CD4-positive, alpha-beta T cell (primary cell): ENCODE measurements at regions of chr5 and their contacts with region 1.

Region 1: DNA sequence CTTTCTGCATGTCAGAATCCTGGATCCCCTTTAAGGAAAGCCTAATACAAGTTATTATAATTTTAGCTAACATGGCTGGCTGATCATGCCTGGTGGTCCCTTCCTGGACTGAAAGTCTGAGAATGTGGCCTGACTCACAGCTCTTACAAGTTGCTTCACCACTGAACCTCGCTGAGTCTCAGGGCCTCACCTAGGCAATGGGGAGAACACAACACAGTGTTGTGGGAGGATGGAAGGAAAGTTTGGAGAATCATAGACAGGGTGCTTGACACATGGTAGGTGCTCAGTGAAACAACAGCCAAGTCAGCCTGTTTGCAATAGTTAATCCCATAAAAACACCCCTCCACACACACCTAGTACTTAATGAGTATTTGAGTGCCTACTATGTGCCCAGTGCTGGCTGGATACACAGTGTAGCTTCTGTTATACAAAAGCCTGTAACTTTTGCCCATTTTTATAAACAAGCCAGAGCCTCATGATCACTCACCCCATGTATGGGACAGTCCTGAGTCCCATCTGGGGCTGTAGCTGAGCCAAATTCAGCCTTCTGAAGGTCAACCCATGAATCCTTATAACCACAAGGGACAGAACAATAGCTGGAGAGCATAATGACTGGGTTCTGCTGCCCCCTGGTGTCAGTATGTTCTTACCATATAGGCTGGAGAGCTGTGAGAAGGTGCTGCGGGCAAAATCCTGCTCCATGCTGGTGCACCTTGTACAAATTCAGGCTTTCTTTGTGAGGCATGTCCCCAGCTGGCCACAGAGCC is 3.9 kb downstream of the ACSL6 start:
- DNase-seq: peak; percentile 58 to 88 (median 72)
- ATAC-seq: peak; percentile 64
- H3K4me3 ChIP-seq: no peak overlapping the region
- H3K4me3 Mint-ChIP-seq: no peak overlapping the region
- H3K27ac ChIP-seq: no peak overlapping the region
- H3K27ac Mint-ChIP-seq: no peak overlapping the region
- H3K4me1 ChIP-seq: peaks cover 63% of the 10 kb centered on the region
- H3K4me1 Mint-ChIP-seq: peaks cover 35% of the 10 kb centered on the region
- H3K27me3 ChIP-seq: peaks cover 11 to 15% of the 10 kb centered on the region in 2 experiments
- H3K27me3 Mint-ChIP-seq: peaks cover 26% of the 10 kb centered on the region
- CTCF ChIP-seq: peak; percentile 80

Region 2: DNA sequence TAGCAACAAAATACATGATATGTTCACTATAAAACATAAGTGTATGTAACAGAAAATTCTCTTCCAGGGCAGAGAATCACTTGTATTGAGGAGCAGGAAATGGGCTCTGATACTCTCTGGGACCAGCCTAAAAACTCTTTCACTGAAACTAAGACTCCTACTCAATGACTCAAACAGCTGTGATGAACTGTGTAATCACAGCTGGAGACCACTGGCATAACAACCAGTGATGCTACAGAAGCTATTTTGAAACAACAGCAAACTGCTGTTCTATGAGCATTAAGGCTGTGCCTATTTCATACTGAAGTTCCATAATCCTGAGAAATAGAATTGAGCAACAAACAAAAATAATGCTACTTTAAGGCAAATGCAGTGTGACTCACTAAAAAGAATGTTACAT is 1436.5 kb before region 1 on chr5:
- CTCF ChIA-PET with region 1: no interaction called
- POLR2A ChIA-PET with region 1: no interaction called
- intact Hi-C with region 1: no loop called
- DNase-seq: no peak
- ATAC-seq: no peak
- H3K4me3 ChIP-seq: no peak overlapping the region
- H3K4me3 Mint-ChIP-seq: no peak overlapping the region
- H3K27ac ChIP-seq: no peak overlapping the region
- H3K27ac Mint-ChIP-seq: no peak overlapping the region
- H3K4me1 ChIP-seq: no peaks in the 10 kb centered on the region
- H3K4me1 Mint-ChIP-seq: no peaks in the 10 kb centered on the region
- H3K27me3 ChIP-seq: no peaks in the 10 kb centered on the region
- H3K27me3 Mint-ChIP-seq: no peaks in the 10 kb centered on the region
- CTCF ChIP-seq: no peak

Region 3: DNA sequence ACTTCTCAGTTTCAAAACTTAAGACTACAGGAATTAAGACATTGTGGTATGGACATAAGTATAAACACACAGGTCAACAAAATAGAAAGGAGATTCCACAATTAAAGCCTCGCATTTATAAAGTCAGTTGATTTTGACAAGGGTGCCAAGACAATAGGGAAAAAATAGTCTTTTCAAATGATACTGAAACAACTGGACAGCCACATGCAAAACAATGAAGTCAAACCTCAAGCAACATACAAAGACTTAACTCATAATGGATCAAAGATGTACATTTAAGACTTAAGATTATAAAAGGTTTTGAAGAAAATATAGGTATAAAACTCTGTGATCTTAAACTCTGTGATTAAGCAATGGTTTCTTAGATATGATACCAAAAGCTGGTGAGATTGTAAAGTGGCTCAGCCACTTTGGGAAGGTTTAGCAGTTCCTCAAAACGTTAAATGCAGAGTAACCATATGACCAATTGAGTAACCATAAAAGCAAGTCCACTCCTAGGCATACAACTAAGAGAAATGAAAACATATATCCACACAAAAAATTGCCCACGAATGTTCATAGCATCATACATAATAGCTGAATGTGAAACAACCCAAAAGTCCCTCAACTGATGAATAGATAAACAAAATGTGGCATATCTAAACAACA is 864.5 kb before region 1 on chr5:
- CTCF ChIA-PET with region 1: no interaction called
- POLR2A ChIA-PET with region 1: no interaction called
- intact Hi-C with region 1: no loop called
- DNase-seq: no peak
- ATAC-seq: no peak
- H3K4me3 ChIP-seq: no peak overlapping the region
- H3K4me3 Mint-ChIP-seq: no peak overlapping the region
- H3K27ac ChIP-seq: no peak overlapping the region
- H3K27ac Mint-ChIP-seq: no peak overlapping the region
- H3K4me1 ChIP-seq: peaks cover 1% of the 10 kb centered on the region
- H3K4me1 Mint-ChIP-seq: peaks cover under 1% of the 10 kb centered on the region
- H3K27me3 ChIP-seq: no peaks in the 10 kb centered on the region
- H3K27me3 Mint-ChIP-seq: no peaks in the 10 kb centered on the region
- CTCF ChIP-seq: no peak

Region 4: GRCh38 chr5:131514316-131515283 is 493.0 kb before region 1 on chr5:
- CTCF ChIA-PET with region 1: no interaction called
- POLR2A ChIA-PET with region 1: no interaction called
- intact Hi-C with region 1: loop called in 1 of 2 experiments (anchors 5 kb)
- DNase-seq: peak in 4 of 14 experiments; percentile 38 to 83 (median 79)
- ATAC-seq: peak; percentile 84
- H3K4me3 ChIP-seq: peak overlapping the region; percentile 30
- H3K4me3 Mint-ChIP-seq: peak overlapping the region; percentile 82
- H3K27ac ChIP-seq: peak overlapping the region; percentile 36 to 39
- H3K27ac Mint-ChIP-seq: peak overlapping the region; percentile 84
- H3K4me1 ChIP-seq: peaks cover 29% of the 10 kb centered on the region
- H3K4me1 Mint-ChIP-seq: peaks cover 84% of the 10 kb centered on the region
- H3K27me3 ChIP-seq: no peaks in the 10 kb centered on the region
- H3K27me3 Mint-ChIP-seq: no peaks in the 10 kb centered on the region
- CTCF ChIP-seq: peak; percentile 54

Region 5: GRCh38 chr5:131589510-131590348 is 417.9 kb before region 1 on chr5:
- CTCF ChIA-PET with region 1: interaction called, 75 read pairs
- POLR2A ChIA-PET with region 1: interaction called, 21 read pairs
- intact Hi-C with region 1: loop called (anchors 1 kb)
- DNase-seq: peak in 8 of 14 experiments; percentile 11 to 76 (median 33)
- ATAC-seq: peak; percentile 71
- H3K4me3 ChIP-seq: no peak overlapping the region
- H3K4me3 Mint-ChIP-seq: no peak overlapping the region
- H3K27ac ChIP-seq: no peak overlapping the region
- H3K27ac Mint-ChIP-seq: peak overlapping the region; percentile 38
- H3K4me1 ChIP-seq: peaks cover 16% of the 10 kb centered on the region
- H3K4me1 Mint-ChIP-seq: peaks cover 64% of the 10 kb centered on the region
- H3K27me3 ChIP-seq: no peaks in the 10 kb centered on the region
- H3K27me3 Mint-ChIP-seq: no peaks in the 10 kb centered on the region
- CTCF ChIP-seq: peak; percentile 98

Region 6: GRCh38 chr5:131706281-131706680 is 301.3 kb before region 1 on chr5:
- CTCF ChIA-PET with region 1: no interaction called
- POLR2A ChIA-PET with region 1: no interaction called
- intact Hi-C with region 1: loop called in 1 of 2 experiments (anchors 5 kb)
- DNase-seq: peak in 2 of 14 experiments; percentile 9 to 14
- ATAC-seq: no peak
- H3K4me3 ChIP-seq: no peak overlapping the region
- H3K4me3 Mint-ChIP-seq: no peak overlapping the region
- H3K27ac ChIP-seq: no peak overlapping the region
- H3K27ac Mint-ChIP-seq: no peak overlapping the region
- H3K4me1 ChIP-seq: no peaks in the 10 kb centered on the region
- H3K4me1 Mint-ChIP-seq: peaks cover 3% of the 10 kb centered on the region
- H3K27me3 ChIP-seq: no peaks in the 10 kb centered on the region
- H3K27me3 Mint-ChIP-seq: no peaks in the 10 kb centered on the region
- CTCF ChIP-seq: no peak

Region 7: GRCh38 chr5:131810510-131811249 is 196.9 kb before region 1 on chr5:
- CTCF ChIA-PET with region 1: no interaction called
- POLR2A ChIA-PET with region 1: interaction called, 9 read pairs
- intact Hi-C with region 1: loop called (anchors 1 kb)
- DNase-seq: peak in 4 of 14 experiments; percentile 8 to 55 (median 34)
- ATAC-seq: peak; percentile 32
- H3K4me3 ChIP-seq: no peak overlapping the region
- H3K4me3 Mint-ChIP-seq: no peak overlapping the region
- H3K27ac ChIP-seq: no peak overlapping the region
- H3K27ac Mint-ChIP-seq: no peak overlapping the region
- H3K4me1 ChIP-seq: no peaks in the 10 kb centered on the region
- H3K4me1 Mint-ChIP-seq: no peaks in the 10 kb centered on the region
- H3K27me3 ChIP-seq: no peaks in the 10 kb centered on the region
- H3K27me3 Mint-ChIP-seq: no peaks in the 10 kb centered on the region
- CTCF ChIP-seq: peak; percentile 26